ENCODE measurements at regions of chr18 and their contacts with region 1.

Region 1: DNA sequence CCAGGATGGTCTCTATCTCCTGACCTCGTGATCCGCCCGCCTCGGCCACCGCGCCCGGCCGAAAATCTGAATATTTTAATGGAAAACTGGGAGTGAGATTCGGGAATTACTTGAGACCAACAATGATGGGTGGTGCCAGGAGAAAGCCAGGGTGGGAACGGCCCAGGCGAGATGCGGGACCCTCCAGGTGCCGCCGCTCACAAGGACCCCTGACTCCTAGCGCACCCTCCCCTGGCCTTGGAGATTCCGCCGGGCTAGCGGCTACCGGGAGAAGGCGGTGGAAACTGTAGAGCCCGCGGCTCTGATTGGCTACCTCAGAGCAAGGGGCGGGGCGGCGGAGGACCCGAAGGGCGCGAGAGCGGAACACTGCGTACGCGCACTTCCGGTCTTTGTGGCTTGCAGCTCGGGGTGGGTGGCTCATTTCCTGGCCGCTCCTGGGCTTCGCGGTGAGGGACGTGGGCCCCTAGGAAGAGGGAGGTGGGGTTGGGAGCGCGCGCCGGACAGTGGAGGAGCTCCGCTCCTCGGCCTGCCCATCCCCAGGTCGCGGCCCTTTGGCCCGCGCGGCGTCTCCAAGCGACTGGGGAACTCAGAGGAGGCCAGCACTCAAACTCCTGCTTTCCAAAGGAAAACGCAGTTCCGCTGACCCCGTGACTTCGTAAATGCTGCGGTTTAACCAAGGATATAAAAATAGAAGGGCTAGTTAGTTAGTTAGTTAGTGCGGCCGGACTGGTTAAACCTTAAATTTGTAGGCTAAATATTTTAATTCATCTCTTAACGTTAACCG is at the start of gene ZNF397:
- DNase-seq: peak; percentile 97
- ATAC-seq: peak; percentile 98
- H3K4me3 ChIP-seq: peak within 1 kb of the TSS; percentile 79 to 95 (median 91)
- H3K4me3 Mint-ChIP-seq: peak within 1 kb of the TSS; percentile 91
- H3K27ac ChIP-seq: peak within 1 kb of the TSS; percentile 97
- H3K27ac Mint-ChIP-seq: peak within 1 kb of the TSS; percentile 99
- H3K4me1 ChIP-seq: peaks cover 10 to 12% of the 10 kb centered on the region in 2 donors
- H3K4me1 Mint-ChIP-seq: peaks cover 29% of the 10 kb centered on the region
- H3K27me3 ChIP-seq: no peaks in the 10 kb centered on the region
- H3K27me3 Mint-ChIP-seq: no peaks in the 10 kb centered on the region
- CTCF ChIP-seq: no peak
- total RNA-seq, gene ZNF397: 63.0 and 67.2 TPM in 2 replicates

Region 2: DNA sequence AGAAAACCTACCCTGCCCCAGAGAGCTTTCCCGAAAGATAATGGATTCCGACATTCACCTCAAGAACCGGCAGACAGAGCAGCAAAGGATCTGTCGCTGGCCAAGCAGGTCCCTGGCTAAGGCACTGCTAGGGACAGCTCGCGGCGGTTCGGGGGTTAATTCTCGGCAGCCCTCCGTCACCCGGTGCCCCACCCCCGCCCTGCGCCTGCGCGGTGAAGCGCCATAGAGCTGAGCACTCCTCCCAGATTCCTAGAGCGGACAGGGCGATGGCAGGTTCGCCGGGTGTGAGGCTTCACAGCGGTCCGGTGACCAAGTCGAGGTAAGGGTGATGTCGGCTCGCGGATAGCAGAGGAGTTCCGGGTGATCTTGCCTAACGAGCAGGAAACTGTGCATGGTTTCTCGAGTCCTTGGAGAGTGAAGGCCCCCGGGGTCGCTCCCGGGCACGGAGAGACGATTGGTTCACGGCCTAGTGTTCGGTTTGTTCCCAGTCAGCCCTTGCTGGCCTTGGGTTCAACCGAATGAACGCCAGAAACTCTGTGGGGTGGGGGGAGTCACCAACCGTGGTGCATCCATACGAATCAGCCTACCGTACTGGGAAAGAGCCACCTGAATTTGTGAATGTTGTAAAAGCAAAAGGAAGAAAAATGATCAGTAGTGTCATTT is 49.3 kb after region 1 on chr18 and contains the start of gene ZSCAN30:
- CTCF ChIA-PET with region 1: interaction called, 8 read pairs
- POLR2A ChIA-PET with region 1: interaction called, 15 read pairs
- intact Hi-C with region 1: loop called (anchors 1 kb)
- DNase-seq: peak; percentile 97
- ATAC-seq: peak; percentile 99
- H3K4me3 ChIP-seq: peak within 1 kb of the TSS; percentile 85 to 94 (median 90)
- H3K4me3 Mint-ChIP-seq: peak within 1 kb of the TSS; percentile 100
- H3K27ac ChIP-seq: peak within 1 kb of the TSS; percentile 80 to 86
- H3K27ac Mint-ChIP-seq: peak within 1 kb of the TSS; percentile 98
- H3K4me1 ChIP-seq: peaks cover 14 to 16% of the 10 kb centered on the region in 2 donors
- H3K4me1 Mint-ChIP-seq: peaks cover 45% of the 10 kb centered on the region
- H3K27me3 ChIP-seq: no peaks in the 10 kb centered on the region
- H3K27me3 Mint-ChIP-seq: no peaks in the 10 kb centered on the region
- CTCF ChIP-seq: no peak
- total RNA-seq, gene ZSCAN30: 32.0 and 37.3 TPM in 2 replicates

Region 3: GRCh38 chr18:36519358-36519757 is 1278.5 kb after region 1 on chr18:
- CTCF ChIA-PET with region 1: no interaction called
- POLR2A ChIA-PET with region 1: no interaction called
- intact Hi-C with region 1: no loop called
- DNase-seq: no peak
- ATAC-seq: no peak
- H3K4me3 ChIP-seq: no peak overlapping the region
- H3K4me3 Mint-ChIP-seq: no peak overlapping the region
- H3K27ac ChIP-seq: no peak overlapping the region
- H3K27ac Mint-ChIP-seq: no peak overlapping the region
- H3K4me1 ChIP-seq: no peaks in the 10 kb centered on the region
- H3K4me1 Mint-ChIP-seq: no peaks in the 10 kb centered on the region
- H3K27me3 ChIP-seq: no peaks in the 10 kb centered on the region
- H3K27me3 Mint-ChIP-seq: peaks cover 34% of the 10 kb centered on the region
- CTCF ChIP-seq: no peak